WTC11 (cell line): ENCODE measurements at regions of chr15 and their contacts with region 1.

Region 1: GRCh38 chr15:76330080-76330680 is 6.4 kb upstream of the ISL2 start:
- DNase-seq: peak; percentile 66
- ATAC-seq: peak; percentile 86
- H3K4me3 Mint-ChIP-seq: no peak overlapping the region
- H3K27ac Mint-ChIP-seq: no peak overlapping the region
- H3K4me1 Mint-ChIP-seq: peaks cover 13% of the 10 kb centered on the region
- H3K27me3 Mint-ChIP-seq: peaks cover 56% of the 10 kb centered on the region
- CTCF ChIP-seq: 0 out of 2 replicates have a peak, but pooled peaks have one; percentile 13

Region 2: DNA sequence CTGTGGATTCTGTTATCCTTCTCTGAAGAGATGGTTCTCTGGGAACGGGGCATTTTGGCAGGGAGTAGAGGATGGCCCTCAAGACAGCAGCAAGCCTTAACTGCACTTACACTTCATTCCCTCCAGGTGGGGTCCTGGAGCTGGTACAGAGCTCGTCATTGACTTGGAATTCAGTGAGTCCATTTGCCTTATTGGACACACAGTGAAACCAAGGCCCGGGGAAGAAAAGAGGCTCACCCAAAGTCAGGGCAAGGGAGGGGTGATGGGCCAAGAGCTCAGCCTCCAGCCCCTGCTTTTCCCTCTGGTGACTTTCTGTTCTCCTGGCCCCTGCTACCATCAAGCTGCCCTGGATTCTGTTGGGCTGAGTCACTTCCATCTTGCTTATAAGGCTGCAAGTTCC is 144.5 kb before region 1 on chr15:
- CTCF ChIA-PET with region 1: interaction called, 34 read pairs
- POLR2A ChIA-PET with region 1: interaction called, 4 read pairs
- DNase-seq: peak; percentile 55
- ATAC-seq: peak; percentile 90
- H3K4me3 Mint-ChIP-seq: no peak overlapping the region
- H3K27ac Mint-ChIP-seq: no peak overlapping the region
- H3K4me1 Mint-ChIP-seq: peaks cover 8% of the 10 kb centered on the region
- H3K27me3 Mint-ChIP-seq: peaks cover 11% of the 10 kb centered on the region
- CTCF ChIP-seq: peak; percentile 71

Region 3: DNA sequence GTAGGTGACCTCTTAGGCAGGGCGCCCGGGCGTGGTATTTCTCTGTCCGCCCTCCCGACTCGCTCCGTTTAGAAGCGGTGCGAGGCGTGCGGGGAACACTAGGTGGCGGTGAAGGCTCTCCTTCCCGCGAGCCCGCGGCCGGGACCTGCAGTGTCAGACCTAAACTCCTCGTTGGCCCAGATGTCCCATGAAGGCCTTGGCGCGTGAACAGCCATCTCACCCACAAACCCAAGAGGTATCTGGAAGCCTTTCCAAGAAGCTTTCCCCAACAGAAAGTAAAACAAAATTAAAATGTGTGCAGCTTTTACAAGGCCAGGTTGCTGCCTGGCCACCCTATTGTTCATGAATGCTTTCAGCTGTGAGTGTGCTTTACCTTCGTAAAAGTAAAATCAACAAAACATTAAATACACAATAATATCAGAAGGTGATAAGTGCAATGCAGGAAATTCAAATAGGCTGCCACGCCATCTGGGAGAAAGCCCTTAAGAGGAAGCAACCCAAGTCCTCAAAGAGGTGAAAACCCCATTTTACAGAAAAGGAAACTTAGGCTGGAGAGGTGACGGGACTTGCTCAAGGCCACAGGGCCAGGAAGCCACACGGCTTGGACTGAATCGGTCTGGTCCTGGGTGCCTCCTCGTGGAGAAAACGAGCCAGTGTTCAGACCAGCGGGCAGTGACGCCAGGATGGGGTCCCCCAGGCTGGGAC is 139.2 kb before region 1 on chr15:
- CTCF ChIA-PET with region 1: interaction called, 34 read pairs
- POLR2A ChIA-PET with region 1: interaction called, 4 read pairs
- DNase-seq: peak; percentile 90
- ATAC-seq: peak; percentile 90
- H3K4me3 Mint-ChIP-seq: 0 out of 2 replicates have a peak overlapping the region, but pooled peaks have one; percentile 5
- H3K27ac Mint-ChIP-seq: no peak overlapping the region
- H3K4me1 Mint-ChIP-seq: peaks cover 13% of the 10 kb centered on the region
- H3K27me3 Mint-ChIP-seq: peaks cover 14% of the 10 kb centered on the region
- CTCF ChIP-seq: peak; percentile 68

Region 4: GRCh38 chr15:76235186-76235826 is 94.9 kb before region 1 on chr15:
- CTCF ChIA-PET with region 1: interaction called, 24 read pairs
- POLR2A ChIA-PET with region 1: interaction called, 3 read pairs
- DNase-seq: no peak
- ATAC-seq: peak; percentile 68
- H3K4me3 Mint-ChIP-seq: no peak overlapping the region
- H3K27ac Mint-ChIP-seq: no peak overlapping the region
- H3K4me1 Mint-ChIP-seq: peaks cover 17% of the 10 kb centered on the region
- H3K27me3 Mint-ChIP-seq: no peaks in the 10 kb centered on the region
- CTCF ChIP-seq: no peak

Region 5: DNA sequence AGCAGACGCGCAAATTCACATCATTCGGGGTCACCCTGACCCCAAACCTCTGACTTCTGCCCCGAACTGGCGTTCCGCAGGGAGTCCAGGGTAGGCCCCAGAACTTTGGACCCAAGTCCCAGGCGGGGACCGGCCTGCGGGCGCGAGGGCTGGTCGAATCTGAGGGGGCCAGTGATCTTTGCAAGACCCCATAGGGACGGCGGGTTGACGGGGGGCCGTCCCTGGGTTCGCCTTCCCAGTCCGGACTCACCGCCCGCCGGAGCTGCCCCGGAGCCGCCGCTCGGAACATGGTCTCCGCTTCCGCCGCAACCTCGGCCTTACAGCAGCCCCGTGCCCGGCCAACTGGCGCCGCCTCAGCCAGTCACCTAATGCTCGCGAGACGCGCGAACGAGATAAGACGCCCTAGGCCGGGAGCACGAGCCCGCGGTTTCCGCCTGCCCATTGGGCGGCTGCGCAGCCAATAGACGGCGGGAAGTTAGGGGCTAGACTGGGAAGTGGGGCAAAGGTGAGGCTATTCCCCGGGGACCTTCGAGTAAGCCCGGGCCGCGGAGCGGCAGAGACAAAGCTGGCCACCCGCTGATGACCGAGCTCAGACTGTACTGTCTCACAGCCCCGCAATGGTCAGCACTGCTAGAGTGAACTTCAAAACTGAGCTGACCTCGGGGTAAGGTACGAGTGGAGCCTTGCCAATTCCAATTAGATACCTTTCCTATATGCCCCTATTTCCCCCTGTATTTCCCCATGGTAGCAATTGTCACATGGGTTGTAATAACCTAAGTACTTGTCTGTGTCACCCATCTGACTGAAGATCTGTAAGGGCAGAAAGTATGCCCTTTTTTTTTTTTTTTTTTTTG is 18.9 kb before region 1 on chr15 and contains the start of gene ETFA:
- CTCF ChIA-PET with region 1: interaction called, 15 read pairs
- POLR2A ChIA-PET with region 1: interaction called, 5 read pairs
- DNase-seq: peak; percentile 96
- ATAC-seq: peak; percentile 99
- H3K4me3 Mint-ChIP-seq: peak within 1 kb of the TSS; percentile 78
- H3K27ac Mint-ChIP-seq: no peak within 1 kb of the TSS
- H3K4me1 Mint-ChIP-seq: peaks cover 10% of the 10 kb centered on the region
- H3K27me3 Mint-ChIP-seq: peaks cover 22% of the 10 kb centered on the region
- CTCF ChIP-seq: no peak
- total RNA-seq, gene ETFA: 84.4 to 97.7 TPM (median 85.4 TPM) in 3 replicates

Region 6: DNA sequence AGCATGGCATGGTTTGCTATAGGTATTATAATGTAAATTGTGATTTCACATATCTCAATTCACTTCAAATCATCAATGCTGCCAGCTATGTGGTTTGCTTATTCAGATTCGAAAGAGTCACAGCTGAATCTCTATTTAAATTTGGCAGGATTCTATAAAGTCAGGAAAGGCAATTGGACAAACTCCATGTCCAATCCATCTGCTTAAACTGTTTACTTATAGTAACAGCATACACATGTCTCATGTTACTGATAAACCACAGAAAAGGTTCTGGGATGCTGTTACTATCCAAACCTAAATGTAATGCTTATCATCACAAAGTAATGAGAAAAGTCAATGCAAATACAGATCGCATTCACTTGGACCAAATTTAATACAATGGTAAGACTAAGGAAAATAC is 236.1 kb after region 1 on chr15:
- CTCF ChIA-PET with region 1: no interaction called
- POLR2A ChIA-PET with region 1: no interaction called
- DNase-seq: no peak
- ATAC-seq: no peak
- H3K4me3 Mint-ChIP-seq: no peak overlapping the region
- H3K27ac Mint-ChIP-seq: no peak overlapping the region
- H3K4me1 Mint-ChIP-seq: peaks cover 5% of the 10 kb centered on the region; the same call in 1 of the 2 replicates
- H3K27me3 Mint-ChIP-seq: no peaks in the 10 kb centered on the region
- CTCF ChIP-seq: no peak